ENCODE measurements at regions of chr6 and their contacts with region 1.

Region 1: GRCh38 chr6:83067448-83068413 is at the start of gene DOP1A:
- DNase-seq: peak in 1 of 2 donors; percentile 91
- H3K4me3 ChIP-seq: peak within 1 kb of the TSS; percentile 86 to 90
- H3K27ac ChIP-seq: peak within 1 kb of the TSS; percentile 90
- H3K4me1 ChIP-seq: peaks cover 45% of the 10 kb centered on the region
- H3K27me3 ChIP-seq: no peaks in the 10 kb centered on the region
- CTCF ChIP-seq: peak; percentile 79 to 98 (median 91)
- POLR2A ChIP-seq: peak in 1 of 2 donors; percentile 37
- total RNA-seq, gene DOP1A: 33.1 TPM

Region 2: GRCh38 chr6:83199863-83200225 is 132.1 kb after region 1 on chr6:
- intact Hi-C with region 1: loop called (anchors 5 kb)
- DNase-seq: no peak
- H3K4me3 ChIP-seq: no peak overlapping the region
- H3K27ac ChIP-seq: no peak overlapping the region
- H3K4me1 ChIP-seq: peaks cover 2% of the 10 kb centered on the region
- H3K27me3 ChIP-seq: no peaks in the 10 kb centered on the region
- CTCF ChIP-seq: no peak
- POLR2A ChIP-seq: no peak

Measured in vagina (tissue), 2 donors.